ENCODE measurements at regions of chr12 and their contacts with region 1.

Region 1: GRCh38 chr12:131621701-131622421 is 89.0 kb upstream of the SFSWAP start:
- DNase-seq: peak in 2 of 5 donors; percentile 25 to 32
- ATAC-seq: peak in 2 of 4 donors; percentile 21 to 28
- H3K4me3 ChIP-seq: no peak overlapping the region
- H3K27ac ChIP-seq: no peak overlapping the region
- H3K4me1 ChIP-seq: peaks cover 0 to 15% (median 2%) of the 10 kb centered on the region in 12 donors
- H3K27me3 ChIP-seq: peaks cover 0 to 54% (median 13%) of the 10 kb centered on the region in 9 donors
- CTCF ChIP-seq: no peak
- POLR2A ChIP-seq: no peak

Region 2: GRCh38 chr12:131340616-131341210 is 281.1 kb before region 1 on chr12:
- intact Hi-C with region 1: loop called in 2 of 10 experiments (anchors 5 kb)
- DNase-seq: no peak
- ATAC-seq: no peak
- H3K4me3 ChIP-seq: no peak overlapping the region
- H3K27ac ChIP-seq: no peak overlapping the region
- H3K4me1 ChIP-seq: no peaks in the 10 kb centered on the region
- H3K27me3 ChIP-seq: peaks cover 0 to 2% (median 0%) of the 10 kb centered on the region in 9 donors
- CTCF ChIP-seq: no peak
- POLR2A ChIP-seq: no peak

Measured in heart left ventricle (tissue), 16 donors.